ENCODE measurements at regions of chr1 and their contacts with region 1.

Region 1: DNA sequence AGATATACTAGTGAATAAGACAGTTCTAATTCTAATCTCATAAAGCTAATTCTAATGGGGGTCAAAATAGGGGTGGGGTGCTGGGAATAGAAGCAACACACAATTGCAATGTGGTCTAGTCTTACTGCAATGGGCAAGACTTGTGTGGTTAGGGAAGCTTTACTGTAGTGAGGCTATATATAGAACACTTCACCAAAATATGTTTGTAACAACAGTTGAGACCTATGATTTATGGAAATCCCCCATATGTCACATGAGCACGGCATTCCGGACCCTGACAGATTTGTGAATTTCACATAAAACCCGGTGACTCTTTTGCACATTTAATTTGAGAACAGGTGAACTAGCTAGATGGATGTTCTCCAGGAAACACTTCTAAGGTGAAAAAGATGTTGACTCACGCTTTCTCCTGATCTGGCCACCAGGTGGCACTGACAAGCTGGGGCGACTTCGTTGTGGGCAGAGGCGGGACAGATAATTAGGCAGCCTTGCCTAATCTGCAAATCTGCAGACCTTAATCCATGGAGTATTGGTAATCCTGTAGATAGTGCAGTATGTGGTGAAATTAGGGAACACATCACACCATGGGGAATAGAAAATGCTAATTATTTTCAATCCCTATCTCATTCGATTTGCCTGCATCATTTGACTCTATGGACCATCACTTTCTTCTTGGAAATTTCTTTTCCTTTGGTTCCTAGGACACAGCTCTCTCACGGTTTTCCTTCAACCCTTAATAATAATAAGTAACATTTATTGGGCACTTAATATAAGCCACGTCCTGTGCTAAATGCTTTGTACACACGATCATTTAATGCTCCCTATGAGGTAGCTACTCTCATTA is 37.7 kb downstream of the KIAA0040 start:
- DNase-seq: peak; percentile 67 to 94
- H3K4me3 ChIP-seq: no peak overlapping the region
- CTCF ChIP-seq: no peak
- POLR2A ChIP-seq: no peak

Region 2: DNA sequence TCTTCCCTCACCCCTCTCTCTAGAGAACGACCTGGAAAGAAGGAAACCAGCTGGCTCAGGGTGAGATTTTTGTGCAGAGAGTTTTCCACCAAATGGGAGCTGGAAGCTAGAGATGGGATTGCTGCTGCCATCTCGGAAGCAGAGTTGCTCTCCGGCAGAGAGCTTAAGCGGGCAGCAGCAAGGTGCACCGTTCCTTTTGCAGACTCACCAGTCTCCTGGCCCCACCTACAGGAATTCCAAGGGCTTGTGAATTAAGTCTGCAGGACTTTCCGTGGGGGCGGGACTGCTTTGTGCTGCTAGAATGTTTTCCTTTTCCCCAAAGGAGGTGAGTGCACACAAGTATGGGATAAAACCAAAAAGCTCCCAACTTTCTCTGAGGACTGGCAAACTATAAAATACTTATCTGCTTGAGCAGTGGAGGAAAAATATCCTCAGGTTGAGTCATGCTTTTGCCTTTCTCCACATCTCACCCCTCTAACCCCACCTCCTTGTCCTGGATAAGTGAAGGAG is 66.9 kb after region 1 on chr1:
- intact Hi-C with region 1: loop called (anchors 10 kb)
- DNase-seq: no peak
- H3K4me3 ChIP-seq: no peak overlapping the region
- CTCF ChIP-seq: no peak
- POLR2A ChIP-seq: no peak

Region 3: GRCh38 chr1:175237389-175237788 is 82.5 kb after region 1 on chr1:
- intact Hi-C with region 1: no loop called
- DNase-seq: no peak
- H3K4me3 ChIP-seq: no peak overlapping the region
- CTCF ChIP-seq: no peak
- POLR2A ChIP-seq: no peak

Region 4: GRCh38 chr1:175319418-175320230 is 164.8 kb after region 1 on chr1:
- intact Hi-C with region 1: loop called (anchors 2 kb)
- DNase-seq: peak; percentile 62 to 92
- H3K4me3 ChIP-seq: no peak overlapping the region
- CTCF ChIP-seq: peak in 1 of 3 donors; percentile 85
- POLR2A ChIP-seq: no peak

Measured in lower leg skin (tissue), 4 donors.